WTC11 (cell line): ENCODE measurements at regions of chr16 and their contacts with region 1.

Region 1: DNA sequence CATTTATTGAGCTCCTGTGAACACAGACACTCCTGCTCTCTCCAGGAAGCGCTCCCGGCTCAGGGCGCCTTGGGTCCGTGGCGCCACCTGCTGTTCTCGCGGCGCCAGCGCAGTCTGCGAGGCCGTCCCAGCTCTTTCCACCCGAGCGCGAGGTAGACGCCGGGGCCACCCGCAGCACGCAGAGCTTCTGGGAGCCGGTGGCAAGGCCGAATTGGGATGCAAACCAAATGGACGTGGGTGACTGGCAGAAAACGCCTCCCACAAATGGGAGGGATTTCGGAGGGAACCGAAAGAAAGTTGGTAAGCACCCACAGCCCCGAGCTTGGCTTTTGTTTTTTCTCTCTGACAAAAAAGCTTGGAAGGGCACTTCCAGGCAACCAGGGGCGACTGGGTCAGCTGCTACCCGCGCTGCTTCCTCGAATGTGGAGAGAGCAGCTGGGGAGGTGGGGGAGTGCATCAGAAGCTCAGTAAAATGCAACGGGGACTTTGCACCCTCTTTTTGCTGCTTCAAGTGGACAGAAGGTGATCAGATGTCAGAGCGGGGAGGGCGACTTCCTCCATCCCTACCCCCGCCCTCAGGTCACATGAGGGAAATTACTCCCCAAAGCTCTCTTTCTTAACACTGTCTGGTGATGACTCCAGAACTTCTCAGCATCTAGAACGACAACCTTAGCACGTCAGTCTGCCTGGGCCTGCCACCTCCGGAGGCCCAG is 13.5 kb upstream of the N4BP1 start:
- DNase-seq: peak; percentile 81
- ATAC-seq: peak; percentile 93
- H3K4me3 Mint-ChIP-seq: peak overlapping the region; percentile 83
- H3K27ac Mint-ChIP-seq: peak overlapping the region; percentile 27; the same call in 1 of the 2 replicates
- H3K4me1 Mint-ChIP-seq: peaks cover 10% of the 10 kb centered on the region
- H3K27me3 Mint-ChIP-seq: no peaks in the 10 kb centered on the region; the same call in 1 of the 2 replicates
- CTCF ChIP-seq: peak; percentile 90

Region 2: GRCh38 chr16:48231727-48232492 is 391.6 kb before region 1 on chr16:
- CTCF ChIA-PET with region 1: interaction called, 17 read pairs
- POLR2A ChIA-PET with region 1: no interaction called
- DNase-seq: peak; percentile 53
- ATAC-seq: peak; percentile 95
- H3K4me3 Mint-ChIP-seq: no peak overlapping the region
- H3K27ac Mint-ChIP-seq: no peak overlapping the region
- H3K4me1 Mint-ChIP-seq: peaks cover 13% of the 10 kb centered on the region
- H3K27me3 Mint-ChIP-seq: no peaks in the 10 kb centered on the region
- CTCF ChIP-seq: no peak

Region 3: DNA sequence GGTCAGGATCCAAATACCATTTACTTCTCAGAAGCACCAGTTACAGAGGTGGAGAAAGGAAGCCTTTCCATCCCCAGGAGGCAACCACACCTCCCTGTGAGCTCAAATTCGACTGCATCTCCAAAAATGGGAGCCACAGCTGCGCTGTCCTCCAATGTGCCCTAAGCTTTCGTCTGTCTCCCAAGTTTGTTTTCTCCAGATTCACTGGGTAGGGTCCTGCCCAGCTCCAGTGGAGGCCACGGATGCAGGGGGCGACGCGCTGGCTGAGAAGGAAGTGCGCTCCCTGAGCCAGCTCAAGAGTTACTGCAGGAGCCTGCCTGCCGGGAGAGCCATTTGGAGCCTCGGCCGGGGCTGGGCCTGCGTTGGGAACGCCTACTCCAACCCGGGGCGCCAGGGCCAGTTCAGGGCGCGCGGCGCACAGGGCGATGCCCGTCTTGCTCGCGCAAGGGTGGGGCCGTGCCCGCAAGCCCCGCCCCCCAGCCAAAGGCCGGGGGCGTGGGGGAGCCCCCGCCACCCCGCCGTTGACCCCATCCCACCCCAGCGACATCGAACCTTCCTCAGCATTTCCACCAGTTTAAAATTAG is 257.8 kb before region 1 on chr16:
- CTCF ChIA-PET with region 1: interaction called, 26 read pairs
- POLR2A ChIA-PET with region 1: interaction called, 6 read pairs
- DNase-seq: peak; percentile 94
- ATAC-seq: peak; percentile 98
- H3K4me3 Mint-ChIP-seq: peak overlapping the region; percentile 79
- H3K27ac Mint-ChIP-seq: peak overlapping the region; percentile 94
- H3K4me1 Mint-ChIP-seq: peaks cover 53% of the 10 kb centered on the region
- H3K27me3 Mint-ChIP-seq: no peaks in the 10 kb centered on the region
- CTCF ChIP-seq: no peak

Region 4: GRCh38 chr16:48526058-48526957 is 97.2 kb before region 1 on chr16:
- CTCF ChIA-PET with region 1: interaction called, 40 read pairs
- POLR2A ChIA-PET with region 1: no interaction called
- DNase-seq: peak; percentile 72
- ATAC-seq: peak; percentile 96
- H3K4me3 Mint-ChIP-seq: no peak overlapping the region
- H3K27ac Mint-ChIP-seq: no peak overlapping the region
- H3K4me1 Mint-ChIP-seq: peaks cover 6% of the 10 kb centered on the region
- H3K27me3 Mint-ChIP-seq: no peaks in the 10 kb centered on the region
- CTCF ChIP-seq: no peak

Region 5: DNA sequence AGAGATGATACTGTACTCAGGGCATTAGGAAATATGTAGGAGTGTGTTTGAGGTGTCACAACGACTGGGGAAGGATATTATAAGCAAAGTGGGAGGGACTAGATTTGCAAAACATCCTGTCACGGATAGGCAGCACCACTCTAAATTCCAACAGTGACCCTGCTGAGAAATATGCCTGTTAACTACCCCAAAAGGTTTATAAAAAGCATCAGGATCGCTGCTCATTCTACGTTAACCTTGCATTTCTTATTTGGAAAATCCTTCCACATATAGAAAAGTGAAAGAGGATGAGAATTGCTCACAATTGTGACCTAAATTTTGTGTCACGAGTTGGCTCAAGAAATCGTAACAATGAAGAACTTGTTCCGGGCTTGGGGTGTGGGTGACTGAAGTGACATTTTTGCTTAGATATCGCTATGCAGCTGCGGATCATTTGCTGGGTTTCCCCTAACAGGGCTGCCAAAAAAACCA is 65.1 kb before region 1 on chr16:
- CTCF ChIA-PET with region 1: interaction called, 45 read pairs
- POLR2A ChIA-PET with region 1: no interaction called
- DNase-seq: no peak
- ATAC-seq: no peak
- H3K4me3 Mint-ChIP-seq: no peak overlapping the region
- H3K27ac Mint-ChIP-seq: peak overlapping the region; percentile 39
- H3K4me1 Mint-ChIP-seq: peaks cover 39% of the 10 kb centered on the region
- H3K27me3 Mint-ChIP-seq: no peaks in the 10 kb centered on the region
- CTCF ChIP-seq: no peak

Region 6: DNA sequence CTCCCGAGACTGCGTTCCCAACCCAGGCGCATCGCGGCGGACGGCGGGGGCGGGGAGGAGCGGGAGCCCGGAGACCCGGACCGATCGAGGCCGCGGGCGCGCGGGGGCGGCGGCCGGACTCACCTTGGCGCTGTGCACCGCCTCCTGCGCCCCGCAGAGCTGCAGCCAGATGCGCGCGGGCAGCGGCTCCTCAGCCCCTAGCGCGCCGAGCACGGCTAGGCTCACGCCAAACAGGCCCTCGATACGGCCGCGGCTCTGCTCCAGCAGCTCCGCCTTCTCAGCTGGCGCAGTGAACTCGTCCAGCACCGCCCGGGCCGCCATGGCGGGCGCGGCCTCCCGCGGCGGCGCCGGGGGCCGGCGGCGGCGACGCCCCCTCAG is 13.8 kb before region 1 on chr16:
- CTCF ChIA-PET with region 1: interaction called, 90 read pairs
- POLR2A ChIA-PET with region 1: interaction called, 5 read pairs
- DNase-seq: peak; percentile 56
- ATAC-seq: peak; percentile 27
- H3K4me3 Mint-ChIP-seq: peak overlapping the region; percentile 48
- H3K27ac Mint-ChIP-seq: no peak overlapping the region
- H3K4me1 Mint-ChIP-seq: peaks cover 42% of the 10 kb centered on the region
- H3K27me3 Mint-ChIP-seq: no peaks in the 10 kb centered on the region
- CTCF ChIP-seq: no peak